Posterior vena cava (tissue), 2 donors: ENCODE measurements at regions of chr3 and their contacts with region 1.

Region 1: GRCh38 chr3:49358217-49358883 is at the start of gene GPX1:
- DNase-seq: peak; percentile 99
- total RNA-seq, gene GPX1: 212 to 242 TPM

Region 2: DNA sequence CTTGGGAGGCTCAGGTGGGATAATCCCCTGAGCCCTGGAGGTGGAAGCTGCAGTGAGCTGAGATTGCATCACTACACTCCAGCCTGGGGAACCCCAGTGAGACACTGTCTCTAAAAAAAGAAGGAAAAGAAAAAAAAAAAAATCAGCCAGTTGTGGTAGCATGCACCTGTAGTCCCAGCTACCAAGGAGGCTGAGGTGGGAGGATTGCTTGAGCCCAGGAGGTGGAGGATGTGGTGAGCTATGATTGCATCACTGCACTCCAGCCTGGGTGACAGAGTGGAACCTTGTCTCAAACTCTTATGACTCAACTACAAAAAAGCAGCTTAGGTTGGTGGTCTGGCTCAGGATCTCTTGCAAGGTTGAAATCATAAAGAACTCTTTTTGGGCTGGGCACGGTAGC is 19.1 kb after region 1 on chr3:
- intact Hi-C with region 1: loop called in 1 of 2 experiments (anchors 2 kb)
- DNase-seq: no peak

Region 3: DNA sequence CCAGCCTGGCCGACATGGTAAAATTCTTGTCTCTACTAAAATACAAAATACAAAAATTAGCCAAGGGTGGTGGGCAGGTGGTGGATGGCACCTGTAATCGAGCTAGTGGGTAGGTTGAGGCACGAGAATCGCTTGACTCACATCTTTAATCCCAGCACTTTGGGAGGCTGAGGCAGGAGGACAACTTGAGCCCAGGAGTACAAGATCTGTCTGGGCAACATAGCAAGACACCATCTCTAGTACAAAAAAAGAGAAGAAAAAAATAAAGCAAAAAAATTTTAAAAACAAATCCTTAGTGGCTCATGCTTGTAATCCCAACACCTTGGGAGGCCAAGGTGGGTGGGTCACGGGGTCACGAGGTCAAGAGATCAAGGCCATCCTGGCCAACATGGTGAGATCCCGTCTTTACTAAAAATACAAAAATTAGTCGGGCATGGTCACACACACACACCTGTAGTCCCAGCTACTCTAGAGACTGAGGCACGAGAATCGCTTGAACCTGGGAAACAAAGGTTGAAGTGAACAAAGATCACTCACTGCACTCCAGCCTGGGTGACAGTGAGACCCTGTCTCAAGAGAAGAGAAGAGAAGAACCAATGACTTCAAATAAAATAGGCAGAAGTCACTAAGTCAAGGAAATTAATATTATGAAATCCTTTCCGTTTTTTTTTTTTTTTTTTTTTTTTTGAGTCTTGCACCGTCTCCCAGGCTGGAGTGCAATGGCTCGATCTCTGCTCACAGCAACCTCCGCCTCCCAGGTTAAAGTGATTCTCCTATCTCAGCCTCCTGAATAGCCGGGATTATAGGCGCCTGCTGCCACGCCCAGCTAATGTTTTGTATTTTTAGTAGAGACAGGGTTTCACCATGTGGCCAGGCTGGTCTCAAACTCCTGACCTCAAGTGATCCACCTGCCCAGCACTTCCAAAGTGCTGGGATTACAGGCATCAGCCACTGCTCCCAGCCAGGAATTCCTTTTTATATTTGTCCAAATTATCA is 48.5 kb after region 1 on chr3:
- intact Hi-C with region 1: loop called (anchors 10 kb)
- DNase-seq: no peak

Region 4: DNA sequence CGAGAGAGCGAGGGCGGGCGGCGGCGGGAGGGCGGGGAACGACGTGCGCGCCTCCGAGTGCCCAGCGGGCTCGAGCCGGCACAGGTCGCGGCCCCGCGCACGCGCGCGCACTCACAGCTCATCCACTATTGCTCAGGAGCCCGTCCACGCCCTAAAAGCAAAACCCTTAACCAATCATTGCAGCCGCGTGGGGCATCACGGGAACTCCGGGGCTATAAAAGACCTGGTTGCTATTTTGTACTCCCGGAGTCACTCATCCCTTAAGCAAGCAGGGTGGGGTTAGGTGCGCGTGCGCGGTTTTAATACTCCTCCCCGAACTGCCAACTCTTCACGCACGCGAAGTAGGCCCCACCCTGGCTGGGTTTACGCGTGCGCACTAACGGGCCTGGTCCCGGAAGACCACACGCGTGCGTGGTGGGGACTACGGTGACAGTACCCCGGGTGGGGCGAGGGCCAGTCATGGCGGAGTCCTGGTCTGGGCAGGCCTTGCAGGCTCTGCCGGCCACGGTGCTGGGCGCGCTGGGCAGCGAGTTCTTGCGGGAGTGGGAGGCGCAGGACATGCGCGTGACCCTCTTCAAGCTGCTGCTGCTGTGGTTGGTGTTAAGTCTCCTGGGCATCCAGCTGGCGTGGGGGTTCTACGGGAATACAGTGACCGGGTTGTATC is 53.8 kb after region 1 on chr3 and contains the starts of genes RHOA and TCTA:
- intact Hi-C with region 1: loop called (anchors 10 kb)
- DNase-seq: peak; percentile 100
- total RNA-seq, gene RHOA: 530 to 640 TPM
- total RNA-seq, gene TCTA: 20.8 to 33.6 TPM